Right ventricle myocardium inferior (tissue), 1 donor: ENCODE measurements at regions of chr7 and their contacts with region 1.

Region 1: DNA sequence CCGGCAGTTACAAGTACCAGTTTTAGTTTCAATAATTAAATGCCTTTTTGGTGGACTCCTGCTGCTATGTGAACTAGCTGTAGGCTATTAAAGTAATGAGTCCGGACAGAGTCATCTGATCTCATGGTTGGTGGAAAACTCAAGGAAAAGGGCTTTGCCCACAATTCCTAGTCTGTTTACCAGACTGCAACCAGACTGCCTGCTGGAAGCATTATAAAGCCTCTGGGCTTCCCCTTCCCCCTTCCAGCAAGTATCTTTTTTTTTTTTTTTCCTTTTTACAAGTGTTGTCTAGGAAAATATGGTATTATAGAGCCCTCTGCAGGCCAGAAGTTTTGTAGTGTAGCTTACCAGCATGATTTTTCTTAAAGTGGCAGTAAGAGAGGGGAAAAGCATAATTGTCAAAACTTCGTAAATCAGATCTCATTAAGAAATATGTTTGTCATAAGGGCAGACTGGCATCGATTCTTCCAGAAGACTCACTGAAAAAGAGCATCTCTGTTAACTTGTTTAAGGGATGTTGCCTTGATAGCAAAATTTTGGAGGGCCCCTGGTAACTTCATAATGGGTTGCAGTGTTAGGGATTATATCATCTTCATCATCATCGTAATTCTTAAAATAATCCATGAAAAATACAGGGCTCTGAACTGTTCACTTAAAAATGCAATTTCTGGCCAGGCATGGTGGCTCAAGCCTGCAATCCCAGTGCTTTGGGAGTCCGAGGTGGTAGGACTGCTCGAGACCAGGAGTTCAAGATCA is 181.3 kb downstream of the TAX1BP1 start:
- DNase-seq: no peak
- ATAC-seq: no peak

Region 2: GRCh38 chr7:27196287-27196767 is 724.9 kb before region 1 on chr7:
- intact Hi-C with region 1: loop called (anchors 5 kb)
- DNase-seq: peak; percentile 88
- ATAC-seq: peak; percentile 50

Region 3: DNA sequence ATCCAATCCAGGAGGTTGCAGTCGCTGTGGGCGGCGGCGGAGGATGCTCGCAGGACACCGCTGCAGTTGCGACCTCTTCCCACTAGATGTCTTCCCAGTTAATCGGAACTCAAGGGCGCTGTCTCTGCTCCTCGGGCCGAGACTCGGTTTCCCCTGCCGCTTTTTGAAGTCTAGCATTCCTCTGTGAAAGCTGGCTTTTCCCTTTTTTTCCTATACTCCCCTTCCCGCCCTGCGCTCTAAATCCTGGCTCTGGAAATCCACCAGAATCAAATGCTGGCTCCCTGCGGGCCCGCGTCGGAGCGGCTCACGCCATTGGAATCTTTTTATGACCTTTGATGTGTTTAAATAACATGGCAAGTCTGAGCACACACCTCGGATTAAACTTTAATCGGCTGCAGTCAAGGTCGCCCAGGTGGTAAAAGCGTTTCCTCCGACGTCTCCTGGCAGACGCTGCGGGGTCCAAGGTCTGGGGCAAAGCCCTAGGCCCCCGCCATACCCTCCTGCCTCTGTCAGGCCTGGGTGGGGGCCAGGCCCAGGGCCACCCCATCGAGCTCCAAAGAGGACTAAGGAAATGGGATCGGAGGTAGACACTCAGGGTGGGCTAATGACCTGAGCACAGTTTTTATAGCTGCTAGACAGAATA is 710.7 kb before region 1 on chr7:
- intact Hi-C with region 1: loop called (anchors 5 kb)
- DNase-seq: no peak
- ATAC-seq: peak; percentile 59

Region 4: GRCh38 chr7:27586825-27587224 is 334.4 kb before region 1 on chr7:
- intact Hi-C with region 1: loop called (anchors 10 kb)
- DNase-seq: no peak
- ATAC-seq: no peak

Region 5: GRCh38 chr7:28020302-28020940 is 99.2 kb after region 1 on chr7:
- intact Hi-C with region 1: loop called (anchors 2 kb)
- DNase-seq: no peak
- ATAC-seq: peak; percentile 79

Region 6: GRCh38 chr7:28096713-28097112 is 175.5 kb after region 1 on chr7:
- intact Hi-C with region 1: loop called (anchors 10 kb)
- DNase-seq: no peak
- ATAC-seq: peak; percentile 81